ENCODE measurements at regions of chr4 and their contacts with region 1.

Region 1: GRCh38 chr4:102234243-102234838 is 110.9 kb downstream of the SLC39A8 start:
- DNase-seq: no peak
- H3K4me3 ChIP-seq: no peak overlapping the region
- CTCF ChIP-seq: no peak
- POLR2A ChIP-seq: no peak

Region 2: GRCh38 chr4:102114123-102114630 is 120.2 kb before region 1 on chr4:
- intact Hi-C with region 1: loop called (anchors 10 kb)
- DNase-seq: no peak
- H3K4me3 ChIP-seq: no peak overlapping the region
- CTCF ChIP-seq: no peak
- POLR2A ChIP-seq: no peak

Measured in lower leg skin (tissue), 4 donors.